WTC11 (cell line): ENCODE measurements at regions of chr7 and their contacts with region 1.

Region 1: GRCh38 chr7:135274495-135275268 is 41.0 kb downstream of the STRA8 start:
- DNase-seq: peak; percentile 88
- ATAC-seq: peak; percentile 89
- H3K4me3 Mint-ChIP-seq: no peak overlapping the region
- H3K27ac Mint-ChIP-seq: no peak overlapping the region
- H3K4me1 Mint-ChIP-seq: no peaks in the 10 kb centered on the region
- H3K27me3 Mint-ChIP-seq: no peaks in the 10 kb centered on the region; the same call in 1 of the 2 replicates
- CTCF ChIP-seq: peak; percentile 90

Region 2: DNA sequence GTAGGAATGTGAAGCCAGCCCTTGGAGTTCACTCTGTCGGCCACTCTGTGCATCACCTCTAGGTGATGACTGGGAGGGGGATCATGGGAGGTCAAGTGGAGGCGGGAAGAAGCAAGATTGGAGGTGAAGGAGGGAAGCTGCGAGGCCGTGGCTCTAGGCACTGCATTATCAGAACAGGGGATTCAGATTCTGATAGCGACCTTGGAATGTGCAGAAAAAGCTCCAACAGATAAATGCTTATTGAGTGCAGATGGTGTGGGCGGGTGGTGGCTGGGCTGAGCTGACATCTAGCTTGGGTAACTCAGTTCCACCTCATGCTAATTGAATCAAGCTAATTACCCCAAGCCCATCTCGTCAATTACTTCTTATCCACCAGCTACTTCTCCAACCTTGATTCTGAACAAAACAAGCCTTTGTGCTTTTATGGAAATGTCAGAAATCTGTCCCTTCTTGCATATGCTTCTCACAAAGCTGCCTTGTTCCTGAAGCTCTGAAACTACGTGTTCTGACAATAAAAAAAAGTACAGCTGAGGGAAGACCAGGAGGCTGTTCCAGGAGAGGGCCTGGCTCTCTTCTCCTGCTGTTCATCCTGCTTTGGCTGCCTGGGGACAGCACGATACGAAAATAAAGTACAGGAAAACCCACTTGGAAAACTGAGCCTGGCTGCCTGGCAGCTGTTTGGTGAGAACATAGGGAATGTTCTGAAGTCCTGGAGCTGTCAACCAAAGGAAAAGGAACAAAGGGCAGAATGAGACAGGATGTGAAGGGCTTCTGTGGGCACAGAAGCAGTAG is 13.6 kb before region 1 on chr7:
- CTCF ChIA-PET with region 1: interaction called, 52 read pairs
- POLR2A ChIA-PET with region 1: no interaction called
- DNase-seq: no peak
- ATAC-seq: no peak
- H3K4me3 Mint-ChIP-seq: no peak overlapping the region
- H3K27ac Mint-ChIP-seq: no peak overlapping the region
- H3K4me1 Mint-ChIP-seq: peaks cover 14% of the 10 kb centered on the region
- H3K27me3 Mint-ChIP-seq: no peaks in the 10 kb centered on the region; the same call in 1 of the 2 replicates
- CTCF ChIP-seq: no peak

Region 3: DNA sequence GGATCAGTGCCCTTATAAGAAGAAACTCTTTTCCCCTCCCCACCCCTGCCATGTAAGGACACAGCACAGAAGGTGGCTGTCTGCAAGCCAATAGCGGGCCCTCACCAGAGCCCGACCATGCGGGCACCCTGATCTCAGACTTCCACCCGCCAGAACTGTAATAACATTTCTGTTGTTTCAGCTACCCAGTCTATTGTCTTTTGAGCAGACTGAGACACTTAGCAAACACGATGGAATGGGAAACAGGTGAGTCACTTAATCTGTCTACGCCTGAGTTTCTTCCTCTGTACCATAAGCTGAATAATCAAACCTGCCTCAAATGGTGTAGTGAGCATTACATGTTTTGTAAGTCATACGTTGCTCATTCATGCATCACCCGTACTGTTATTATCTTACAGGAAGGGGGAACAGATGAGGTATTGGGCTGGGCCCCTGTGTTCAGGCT is 17.1 kb after region 1 on chr7:
- CTCF ChIA-PET with region 1: interaction called, 16 read pairs
- POLR2A ChIA-PET with region 1: no interaction called
- DNase-seq: no peak
- ATAC-seq: no peak
- H3K4me3 Mint-ChIP-seq: no peak overlapping the region
- H3K27ac Mint-ChIP-seq: no peak overlapping the region
- H3K4me1 Mint-ChIP-seq: peaks cover 6% of the 10 kb centered on the region; the same call in 1 of the 2 replicates
- H3K27me3 Mint-ChIP-seq: peaks cover 3% of the 10 kb centered on the region; the same call in 1 of the 2 replicates
- CTCF ChIP-seq: no peak

Region 4: GRCh38 chr7:135335628-135336139 is 61.0 kb after region 1 on chr7:
- CTCF ChIA-PET with region 1: interaction called, 64 read pairs
- POLR2A ChIA-PET with region 1: no interaction called
- DNase-seq: peak; percentile 97
- ATAC-seq: peak; percentile 100
- H3K4me3 Mint-ChIP-seq: no peak overlapping the region
- H3K27ac Mint-ChIP-seq: no peak overlapping the region
- H3K4me1 Mint-ChIP-seq: peaks cover 5% of the 10 kb centered on the region
- H3K27me3 Mint-ChIP-seq: no peaks in the 10 kb centered on the region
- CTCF ChIP-seq: peak; percentile 55; the same call in 1 of the 2 replicates

Region 5: DNA sequence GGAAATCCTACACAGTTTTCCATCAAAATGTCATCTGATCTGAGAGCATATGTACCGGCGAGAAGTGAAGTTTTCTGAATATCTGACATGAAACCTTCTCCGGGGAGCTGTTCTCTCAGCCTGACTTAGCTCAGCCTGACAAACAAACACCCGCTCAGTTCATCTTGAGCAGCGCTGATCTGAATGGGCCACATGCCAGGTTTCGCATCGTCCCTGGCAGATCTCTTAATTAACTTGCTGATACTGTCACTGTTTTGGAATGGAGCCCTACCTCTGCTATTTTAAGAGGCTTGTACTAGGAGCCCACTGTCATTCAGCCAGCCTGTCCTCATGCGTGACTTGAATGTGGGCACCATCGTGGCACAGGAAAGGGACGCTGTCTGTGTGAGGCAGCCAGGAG is 68.2 kb after region 1 on chr7:
- CTCF ChIA-PET with region 1: interaction called, 22 read pairs
- POLR2A ChIA-PET with region 1: no interaction called
- DNase-seq: no peak
- ATAC-seq: no peak
- H3K4me3 Mint-ChIP-seq: no peak overlapping the region
- H3K27ac Mint-ChIP-seq: no peak overlapping the region
- H3K4me1 Mint-ChIP-seq: no peaks in the 10 kb centered on the region
- H3K27me3 Mint-ChIP-seq: no peaks in the 10 kb centered on the region
- CTCF ChIP-seq: no peak

Region 6: GRCh38 chr7:135355377-135356042 is 80.8 kb after region 1 on chr7:
- CTCF ChIA-PET with region 1: interaction called, 27 read pairs
- POLR2A ChIA-PET with region 1: no interaction called
- DNase-seq: no peak
- ATAC-seq: no peak
- H3K4me3 Mint-ChIP-seq: no peak overlapping the region
- H3K27ac Mint-ChIP-seq: no peak overlapping the region
- H3K4me1 Mint-ChIP-seq: peaks cover 15% of the 10 kb centered on the region
- H3K27me3 Mint-ChIP-seq: no peaks in the 10 kb centered on the region
- CTCF ChIP-seq: no peak

Region 7: GRCh38 chr7:135362871-135363270 is 88.2 kb after region 1 on chr7:
- CTCF ChIA-PET with region 1: interaction called, 20 read pairs
- POLR2A ChIA-PET with region 1: no interaction called
- DNase-seq: peak; percentile 52
- ATAC-seq: peak; percentile 92
- H3K4me3 Mint-ChIP-seq: no peak overlapping the region
- H3K27ac Mint-ChIP-seq: no peak overlapping the region
- H3K4me1 Mint-ChIP-seq: peaks cover 10% of the 10 kb centered on the region
- H3K27me3 Mint-ChIP-seq: no peaks in the 10 kb centered on the region
- CTCF ChIP-seq: peak; percentile 40; the same call in 1 of the 2 replicates